A549 (cell line): ENCODE measurements at regions of chr16 and their contacts with region 1.

Region 1: DNA sequence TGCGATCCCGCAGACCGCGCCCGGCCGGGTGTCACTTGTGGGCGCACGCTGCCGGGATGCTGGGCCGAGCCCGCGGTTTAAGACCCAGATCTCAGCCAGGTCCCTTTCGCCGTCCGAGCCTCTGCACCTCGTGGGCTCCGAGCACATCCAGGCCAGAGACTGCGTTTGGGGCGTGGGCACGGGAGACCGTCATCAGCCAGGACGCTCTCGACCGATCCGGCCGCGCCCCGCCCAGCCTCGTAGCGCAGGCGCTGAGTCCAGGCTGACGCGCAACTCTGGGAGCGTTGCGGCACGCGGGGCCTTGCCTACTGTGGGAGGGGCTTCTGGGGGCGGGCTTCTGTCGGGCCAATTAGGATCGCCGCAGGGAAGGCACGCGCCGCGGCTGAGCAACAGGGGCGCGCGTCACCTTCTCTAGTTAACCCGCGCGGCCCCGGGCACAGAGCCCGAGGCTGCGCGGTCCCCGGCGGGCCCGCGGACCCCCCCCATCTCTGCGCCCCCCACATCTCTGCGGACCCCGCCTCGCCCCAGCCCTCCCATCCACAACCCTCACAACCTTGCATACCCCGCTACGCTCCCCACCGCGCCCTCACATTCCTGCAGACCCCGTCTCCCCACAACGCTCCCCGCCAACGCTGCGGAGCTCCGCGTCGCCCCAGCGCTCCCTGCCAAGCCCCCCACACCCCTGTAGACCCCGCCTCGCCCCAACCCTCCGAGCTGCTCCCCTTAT is 722 bp upstream of the CEMP1 start:
- DNase-seq: peak; percentile 95 to 96
- ATAC-seq: peak; percentile 82 to 93
- H3K4me3 ChIP-seq: peak overlapping the region; percentile 64
- H3K27ac ChIP-seq: peak overlapping the region; percentile 84 to 92
- H3K4me1 ChIP-seq: peaks cover 21% of the 10 kb centered on the region
- CTCF ChIP-seq: no peak
- EP300 ChIP-seq: no peak
- POLR2A ChIP-seq: peak; percentile 76
- RAD21 ChIP-seq: no peak

Region 2: DNA sequence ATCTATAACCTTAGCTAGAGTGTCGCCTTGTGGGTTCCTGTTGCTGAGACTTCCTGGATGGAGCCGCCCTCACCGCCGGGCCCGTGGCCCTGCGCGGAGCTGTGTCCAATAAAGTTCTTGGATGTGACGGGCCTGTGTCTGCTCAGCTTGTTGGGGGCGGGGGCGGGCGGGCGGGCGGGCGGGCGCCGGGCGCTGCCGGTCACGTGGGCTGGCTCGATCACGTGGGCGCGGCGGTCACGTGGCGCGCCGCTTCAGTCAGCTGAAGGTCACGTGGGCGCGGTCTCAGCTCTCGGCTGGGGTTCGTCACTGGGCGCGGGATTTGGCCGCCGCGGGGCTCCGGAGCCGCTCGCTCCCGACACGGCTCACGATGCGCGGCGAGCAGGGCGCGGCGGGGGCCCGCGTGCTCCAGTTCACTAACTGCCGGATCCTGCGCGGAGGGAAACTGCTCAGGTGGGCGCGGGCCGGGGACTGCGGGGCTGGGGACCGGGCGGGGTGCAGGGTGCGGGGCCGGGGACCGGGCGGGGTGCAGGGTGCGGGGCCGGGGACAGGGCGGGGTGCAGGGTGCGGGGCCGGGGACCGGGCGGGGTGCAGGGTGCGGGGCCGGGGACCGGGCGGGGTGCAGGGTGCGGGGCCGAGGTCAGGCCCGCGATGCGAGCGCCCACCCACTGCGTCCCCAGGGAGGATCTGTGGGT is 11.7 kb before region 1 on chr16 and contains the start of gene AMDHD2:
- CTCF ChIA-PET with region 1: interaction called, 8 read pairs
- POLR2A ChIA-PET with region 1: interaction called, 21 read pairs
- DNase-seq: peak; percentile 91 to 93
- ATAC-seq: peak; percentile 57 to 65
- H3K4me3 ChIP-seq: peak within 1 kb of the TSS; percentile 58
- H3K27ac ChIP-seq: peak within 1 kb of the TSS; percentile 71 to 96
- H3K4me1 ChIP-seq: peaks cover 36% of the 10 kb centered on the region
- CTCF ChIP-seq: no peak
- EP300 ChIP-seq: no peak
- POLR2A ChIP-seq: no peak
- RAD21 ChIP-seq: no peak
- polyA plus RNA-seq, gene AMDHD2: 5.2 and 6.6 TPM in 2 replicates

Region 3: DNA sequence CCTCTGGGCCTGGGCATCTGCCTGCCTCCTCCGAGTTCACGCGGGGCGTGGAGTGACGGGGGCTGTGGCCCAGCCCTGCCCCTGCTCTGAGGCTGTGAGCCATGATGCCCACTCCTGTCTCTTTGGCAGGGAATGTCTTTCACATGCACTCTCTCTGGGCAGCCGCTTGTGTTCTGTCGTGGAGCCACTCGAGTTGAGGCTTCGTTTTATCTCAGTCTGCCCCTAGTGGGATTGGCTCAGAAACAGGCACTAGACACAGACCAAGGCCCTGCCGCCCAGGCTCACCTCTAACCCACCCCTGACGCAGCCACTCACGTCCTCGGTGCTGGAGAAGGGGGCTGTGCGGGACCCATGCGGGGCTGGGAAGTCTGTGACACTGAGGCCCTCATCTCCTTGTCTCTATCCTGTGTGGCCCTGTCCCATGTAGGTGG is 82.8 kb after region 1 on chr16:
- CTCF ChIA-PET with region 1: no interaction called
- POLR2A ChIA-PET with region 1: no interaction called
- DNase-seq: no peak
- ATAC-seq: no peak
- H3K4me3 ChIP-seq: no peak overlapping the region
- H3K27ac ChIP-seq: no peak overlapping the region
- H3K4me1 ChIP-seq: no peaks in the 10 kb centered on the region
- CTCF ChIP-seq: no peak
- EP300 ChIP-seq: no peak
- POLR2A ChIP-seq: no peak
- RAD21 ChIP-seq: no peak